ENCODE measurements at regions of chr9 and their contacts with region 1.

Region 1: GRCh38 chr9:97710356-97711222 is 13.4 kb upstream of the XPA start:
- DNase-seq: no peak

Region 2: GRCh38 chr9:97759581-97760288 is 49.1 kb after region 1 on chr9:
- intact Hi-C with region 1: no loop called
- DNase-seq: no peak

Region 3: GRCh38 chr9:97900738-97901565 is 190.4 kb after region 1 on chr9:
- intact Hi-C with region 1: loop called (anchors 1 to 5 kb)
- DNase-seq: no peak